IMR-90 (cell line): ENCODE measurements at regions of chr5 and their contacts with region 1.

Region 1: DNA sequence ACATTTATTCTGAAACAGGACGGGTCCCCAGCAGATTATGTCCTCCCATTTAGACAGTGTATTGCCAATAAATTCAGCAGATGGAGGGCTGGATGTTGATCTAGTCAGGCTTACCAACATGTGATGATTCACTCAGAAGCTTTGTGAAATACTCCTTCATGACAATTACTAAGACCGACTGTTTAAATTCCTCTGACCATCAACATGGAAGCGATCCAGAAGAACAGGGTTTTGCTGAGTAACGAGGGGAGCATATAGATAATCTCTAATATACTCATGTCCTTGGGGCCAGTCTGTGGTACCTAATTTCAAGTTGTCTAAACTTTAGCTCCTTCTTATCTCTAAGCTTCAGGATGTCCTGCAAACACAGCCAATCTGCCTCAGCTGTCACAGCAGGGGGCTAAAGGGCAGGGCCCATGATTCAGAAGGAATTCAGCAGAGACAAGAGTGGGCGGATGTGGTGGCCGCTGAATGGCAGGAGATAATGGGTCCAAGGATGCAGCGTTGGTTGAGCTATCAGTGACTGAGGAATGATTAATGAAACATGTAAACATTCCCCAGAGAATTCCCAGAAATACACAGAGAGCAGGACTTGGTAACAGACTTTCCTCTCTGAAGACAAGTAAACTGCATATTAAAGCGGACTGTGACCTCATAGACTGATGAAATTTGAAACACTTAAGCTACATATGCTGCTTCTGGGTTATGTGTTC is 109.4 kb downstream of the ANKRD55 start:
- DNase-seq: peak; percentile 100
- ATAC-seq: peak; percentile 90
- H3K4me3 ChIP-seq: no peak overlapping the region
- H3K27ac ChIP-seq: peak overlapping the region; percentile 65; the same call in 1 of the 2 replicates
- H3K4me1 ChIP-seq: peaks cover 16% of the 10 kb centered on the region
- H3K27me3 ChIP-seq: no peaks in the 10 kb centered on the region
- CTCF ChIP-seq: no peak
- POLR2A ChIP-seq: no peak
- RAD21 ChIP-seq: peak; percentile 25

Region 2: DNA sequence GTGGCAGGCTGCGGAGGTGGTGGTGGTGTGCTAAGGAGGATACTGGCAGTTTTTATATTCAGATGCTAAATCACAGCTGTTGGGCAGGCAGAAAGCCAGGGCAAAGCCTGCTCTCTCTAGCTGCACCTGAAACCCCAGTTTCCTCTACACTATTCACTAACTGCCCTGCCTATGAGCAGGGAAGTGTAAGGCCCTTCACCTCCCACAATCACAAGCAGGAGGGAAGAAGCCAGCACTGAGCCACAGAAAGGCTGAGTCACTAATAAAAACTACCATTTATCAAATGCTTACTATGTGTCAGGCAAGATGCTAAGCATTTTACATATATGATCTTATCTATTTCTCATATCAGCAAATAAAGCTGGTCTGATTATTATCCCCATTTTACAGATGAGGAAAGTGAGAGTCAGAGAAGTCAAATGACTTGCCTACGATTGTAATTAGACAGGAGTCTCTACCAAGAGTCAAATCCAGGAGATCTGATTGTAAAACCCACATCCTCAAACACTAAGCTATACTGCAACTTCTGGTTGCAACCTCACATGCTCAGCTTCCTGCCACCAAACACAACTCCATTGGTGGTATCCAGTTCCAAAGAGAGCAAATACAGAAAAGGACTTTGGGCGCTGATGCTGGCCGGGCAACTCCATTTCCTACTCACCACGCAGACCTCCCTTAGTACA is 111.3 kb before region 1 on chr5:
- CTCF ChIA-PET with region 1: no interaction called
- POLR2A ChIA-PET with region 1: no interaction called
- dilution Hi-C with region 1: no loop called
- in situ Hi-C with region 1: no loop called
- intact Hi-C with region 1: loop called (anchors 5 kb)
- DNase-seq: peak; percentile 82
- ATAC-seq: peak; percentile 82
- H3K4me3 ChIP-seq: no peak overlapping the region
- H3K27ac ChIP-seq: peak overlapping the region; percentile 70
- H3K4me1 ChIP-seq: peaks cover 8% of the 10 kb centered on the region
- H3K27me3 ChIP-seq: no peaks in the 10 kb centered on the region
- CTCF ChIP-seq: no peak
- POLR2A ChIP-seq: no peak
- RAD21 ChIP-seq: no peak

Region 3: DNA sequence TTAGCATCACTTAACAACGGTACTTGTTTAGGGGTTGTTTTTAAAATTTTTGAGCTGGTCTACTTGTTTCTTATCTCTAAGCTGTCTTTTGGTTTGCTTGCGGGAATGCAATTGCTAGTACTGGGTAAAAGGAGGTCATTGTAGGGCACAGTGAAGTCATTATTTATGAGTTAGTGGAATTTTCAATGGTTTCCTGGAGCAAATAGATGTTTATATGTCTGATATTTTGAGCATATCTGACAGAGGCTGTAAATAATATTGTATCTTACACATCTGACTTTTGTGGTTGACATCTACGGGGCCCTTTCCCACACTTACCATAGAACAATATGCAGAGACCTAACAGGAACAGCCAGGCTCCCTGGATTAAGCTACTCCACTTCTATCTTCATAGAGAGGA is 38.5 kb before region 1 on chr5:
- CTCF ChIA-PET with region 1: no interaction called
- POLR2A ChIA-PET with region 1: no interaction called
- dilution Hi-C with region 1: no loop called
- in situ Hi-C with region 1: no loop called
- intact Hi-C with region 1: no loop called
- DNase-seq: peak; percentile 35
- ATAC-seq: peak; percentile 61
- H3K4me3 ChIP-seq: no peak overlapping the region
- H3K27ac ChIP-seq: no peak overlapping the region
- H3K4me1 ChIP-seq: peaks cover 11% of the 10 kb centered on the region
- H3K27me3 ChIP-seq: no peaks in the 10 kb centered on the region
- CTCF ChIP-seq: no peak
- POLR2A ChIP-seq: no peak
- RAD21 ChIP-seq: no peak

Region 4: DNA sequence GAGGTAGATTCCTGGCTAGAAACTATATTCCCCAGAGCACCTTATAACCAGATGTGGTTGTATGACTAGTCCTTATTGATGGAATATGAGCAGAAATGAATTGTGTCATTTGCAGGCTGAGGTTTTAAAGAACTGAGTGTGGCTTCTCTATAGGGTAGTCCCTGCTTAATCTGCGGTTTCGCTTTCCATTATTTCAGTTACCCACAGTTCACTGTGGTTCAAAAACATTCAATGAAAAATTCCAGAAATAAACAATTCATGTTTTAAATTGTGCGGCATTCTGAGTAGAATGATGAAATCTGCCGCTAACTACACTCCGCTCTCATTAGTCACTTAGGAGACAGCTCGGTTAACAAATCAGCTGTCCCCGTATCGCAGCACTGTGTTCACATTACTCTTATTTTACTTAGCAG is 44.4 kb after region 1 on chr5:
- CTCF ChIA-PET with region 1: no interaction called
- POLR2A ChIA-PET with region 1: interaction called, 6 read pairs
- dilution Hi-C with region 1: no loop called
- in situ Hi-C with region 1: no loop called
- intact Hi-C with region 1: loop called (anchors 2 kb)
- DNase-seq: peak; percentile 78
- ATAC-seq: peak; percentile 46
- H3K4me3 ChIP-seq: peak overlapping the region; percentile 8; the same call in 1 of the 2 replicates
- H3K27ac ChIP-seq: peak overlapping the region; percentile 39; the same call in 1 of the 2 replicates
- H3K4me1 ChIP-seq: peaks cover 29% of the 10 kb centered on the region
- H3K27me3 ChIP-seq: no peaks in the 10 kb centered on the region
- CTCF ChIP-seq: no peak
- POLR2A ChIP-seq: no peak
- RAD21 ChIP-seq: no peak

Region 5: DNA sequence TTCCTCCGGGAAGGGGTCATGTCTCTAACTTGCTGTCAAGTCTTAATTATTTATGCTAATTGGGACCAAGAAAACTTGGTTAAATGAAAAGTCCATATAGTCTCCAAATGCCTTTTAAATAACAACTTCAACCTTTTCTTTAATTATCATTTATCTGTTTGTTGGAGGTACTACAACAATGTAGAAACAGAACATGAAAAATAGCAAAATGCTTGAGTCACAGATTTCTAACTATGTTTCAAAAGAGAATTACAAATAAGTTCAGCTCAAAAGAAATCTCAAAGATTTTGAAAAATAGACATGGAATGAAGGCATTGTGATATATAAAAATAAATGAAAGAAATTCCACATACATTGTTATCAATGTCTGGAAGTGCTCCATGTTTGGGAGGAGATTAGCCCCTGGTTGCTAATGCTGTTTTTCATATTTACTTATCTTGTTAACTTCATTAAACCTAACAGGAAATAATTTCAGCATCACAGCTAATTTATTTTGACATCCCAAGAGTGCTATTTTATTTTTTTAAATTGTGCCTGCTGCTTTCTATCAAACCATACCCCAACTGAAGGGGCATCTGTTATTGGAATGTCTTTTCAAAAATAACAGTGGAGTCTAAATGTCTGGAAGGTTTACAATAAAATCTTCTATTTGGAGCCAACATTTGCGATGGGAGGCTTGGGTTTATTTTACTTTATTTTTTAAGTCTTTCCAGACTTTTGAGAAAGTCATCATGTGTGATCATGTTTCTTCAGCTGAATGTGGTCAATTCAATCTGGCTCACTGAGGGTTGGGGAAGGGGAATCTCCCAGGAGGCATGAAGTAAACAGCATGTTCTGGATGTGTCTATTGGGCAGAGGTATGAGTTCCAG is 162.6 kb after region 1 on chr5:
- CTCF ChIA-PET with region 1: no interaction called
- POLR2A ChIA-PET with region 1: no interaction called
- dilution Hi-C with region 1: no loop called
- in situ Hi-C with region 1: no loop called
- intact Hi-C with region 1: no loop called
- DNase-seq: peak; percentile 72
- ATAC-seq: peak; percentile 59
- H3K4me3 ChIP-seq: no peak overlapping the region
- H3K27ac ChIP-seq: peak overlapping the region; percentile 93; the same call in 1 of the 2 replicates
- H3K4me1 ChIP-seq: peaks cover 5% of the 10 kb centered on the region
- H3K27me3 ChIP-seq: no peaks in the 10 kb centered on the region
- CTCF ChIP-seq: no peak
- POLR2A ChIP-seq: no peak
- RAD21 ChIP-seq: no peak